CD4-positive, alpha-beta T cell (primary cell): ENCODE measurements at regions of chr15 and their contacts with region 1.

Region 1: GRCh38 chr15:90320061-90320884 is 31.8 kb upstream of the ZNF774 start:
- DNase-seq: peak; percentile 43 to 87 (median 56)
- ATAC-seq: peak; percentile 96
- H3K4me3 ChIP-seq: no peak overlapping the region
- H3K4me3 Mint-ChIP-seq: no peak overlapping the region
- H3K27ac ChIP-seq: no peak overlapping the region
- H3K27ac Mint-ChIP-seq: no peak overlapping the region
- H3K4me1 ChIP-seq: peaks cover 7% of the 10 kb centered on the region
- H3K4me1 Mint-ChIP-seq: peaks cover 9% of the 10 kb centered on the region
- H3K27me3 ChIP-seq: no peaks in the 10 kb centered on the region
- H3K27me3 Mint-ChIP-seq: no peaks in the 10 kb centered on the region
- CTCF ChIP-seq: peak; percentile 96

Region 2: DNA sequence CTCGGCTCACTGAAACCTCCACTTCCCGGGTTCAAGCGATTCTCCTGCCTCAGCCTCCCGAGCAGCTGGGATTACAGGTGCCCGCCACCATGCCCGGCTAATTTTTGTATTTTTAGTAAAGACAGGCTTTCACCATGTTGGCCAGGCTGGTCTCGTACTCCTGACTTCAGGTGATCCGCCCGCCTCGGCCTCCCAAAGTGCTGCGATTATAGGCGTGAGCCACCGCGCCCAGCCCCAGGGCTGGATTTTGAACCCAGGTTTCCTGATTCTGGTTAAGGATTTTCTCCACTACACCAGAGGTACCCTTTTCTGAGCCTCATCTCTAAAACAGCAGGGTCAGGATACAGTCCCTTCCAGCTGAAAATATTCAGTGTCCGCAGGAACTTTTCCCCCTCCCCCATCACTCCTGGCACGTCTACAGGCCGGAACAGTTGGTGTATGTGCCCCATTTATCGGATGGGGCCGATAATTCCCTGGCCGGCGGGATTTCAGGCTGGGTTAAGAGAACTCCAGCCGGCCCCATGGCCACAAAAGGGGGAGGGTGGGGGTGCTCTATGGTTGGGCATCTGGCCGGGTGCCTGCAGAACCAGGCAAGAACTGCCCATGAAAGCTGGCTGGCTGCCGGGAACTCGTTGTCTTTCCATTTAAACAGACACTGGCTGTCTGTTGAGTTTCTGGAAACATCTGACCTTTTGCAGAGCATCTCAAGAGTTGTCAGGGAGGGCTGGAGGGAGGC is 146.0 kb before region 1 on chr15:
- CTCF ChIA-PET with region 1: no interaction called
- POLR2A ChIA-PET with region 1: no interaction called
- intact Hi-C with region 1: no loop called
- DNase-seq: no peak
- ATAC-seq: no peak
- H3K4me3 ChIP-seq: no peak overlapping the region
- H3K4me3 Mint-ChIP-seq: no peak overlapping the region
- H3K27ac ChIP-seq: no peak overlapping the region
- H3K27ac Mint-ChIP-seq: no peak overlapping the region
- H3K4me1 ChIP-seq: peaks cover 12% of the 10 kb centered on the region
- H3K4me1 Mint-ChIP-seq: no peaks in the 10 kb centered on the region
- H3K27me3 ChIP-seq: no peaks in the 10 kb centered on the region
- H3K27me3 Mint-ChIP-seq: no peaks in the 10 kb centered on the region
- CTCF ChIP-seq: no peak

Region 3: GRCh38 chr15:90271459-90272166 is 48.7 kb before region 1 on chr15:
- CTCF ChIA-PET with region 1: no interaction called
- POLR2A ChIA-PET with region 1: no interaction called
- intact Hi-C with region 1: no loop called
- DNase-seq: no peak
- ATAC-seq: no peak
- H3K4me3 ChIP-seq: no peak overlapping the region
- H3K4me3 Mint-ChIP-seq: no peak overlapping the region
- H3K27ac ChIP-seq: no peak overlapping the region
- H3K27ac Mint-ChIP-seq: peak overlapping the region; percentile 85
- H3K4me1 ChIP-seq: peaks cover 51% of the 10 kb centered on the region
- H3K4me1 Mint-ChIP-seq: peaks cover 59% of the 10 kb centered on the region
- H3K27me3 ChIP-seq: no peaks in the 10 kb centered on the region
- H3K27me3 Mint-ChIP-seq: no peaks in the 10 kb centered on the region
- CTCF ChIP-seq: no peak

Region 4: GRCh38 chr15:90362936-90363212 is 42.6 kb after region 1 on chr15:
- CTCF ChIA-PET with region 1: interaction called, 4 read pairs
- POLR2A ChIA-PET with region 1: no interaction called
- intact Hi-C with region 1: loop called (anchors 2 to 5 kb)
- DNase-seq: no peak
- ATAC-seq: no peak
- H3K4me3 ChIP-seq: no peak overlapping the region
- H3K4me3 Mint-ChIP-seq: no peak overlapping the region
- H3K27ac ChIP-seq: no peak overlapping the region
- H3K27ac Mint-ChIP-seq: no peak overlapping the region
- H3K4me1 ChIP-seq: peaks cover 13% of the 10 kb centered on the region
- H3K4me1 Mint-ChIP-seq: peaks cover 28% of the 10 kb centered on the region
- H3K27me3 ChIP-seq: no peaks in the 10 kb centered on the region
- H3K27me3 Mint-ChIP-seq: no peaks in the 10 kb centered on the region
- CTCF ChIP-seq: no peak

Region 5: DNA sequence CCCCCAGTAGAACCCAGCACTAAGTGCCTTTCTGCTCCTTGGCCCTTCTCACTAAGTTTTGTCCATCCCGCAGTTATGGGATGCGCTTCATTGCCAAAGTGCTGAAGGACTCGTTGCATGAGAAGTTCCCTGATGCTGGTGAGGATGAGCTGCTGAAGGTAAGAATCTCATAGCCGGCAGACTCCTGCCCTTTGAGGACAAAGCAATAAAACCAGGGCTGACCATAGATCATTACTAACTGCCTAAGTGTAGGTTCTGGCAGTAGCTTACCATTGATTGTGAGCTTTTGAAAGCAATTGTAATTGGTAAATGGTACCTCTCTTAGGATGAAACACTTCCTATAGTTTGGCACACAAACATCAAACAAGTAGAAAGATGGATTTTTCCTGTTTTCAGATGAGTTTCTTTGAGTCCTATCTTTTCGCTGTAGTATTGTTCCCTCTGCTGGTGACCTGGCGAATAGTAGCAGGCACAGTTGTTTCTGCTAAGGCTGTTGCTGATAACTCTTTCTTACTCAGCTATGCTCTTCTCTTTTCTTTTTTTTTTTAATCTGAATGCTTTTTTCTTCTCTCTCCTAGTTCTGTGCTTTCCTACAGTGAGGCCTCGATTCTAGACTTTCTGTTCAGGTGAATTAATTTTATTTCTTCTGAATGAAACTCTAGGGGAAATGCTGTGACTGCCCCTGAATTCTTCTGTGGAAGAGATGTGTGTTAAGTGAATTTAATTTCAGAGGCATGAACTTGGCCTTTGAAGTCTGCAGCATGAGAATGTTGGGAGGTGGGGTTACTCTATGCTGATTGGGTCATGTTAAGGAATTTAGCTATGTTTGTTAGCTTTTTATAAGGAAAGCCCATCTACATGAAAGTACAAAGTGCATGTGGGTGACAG is 162.1 kb after region 1 on chr15:
- CTCF ChIA-PET with region 1: interaction called, 37 read pairs
- POLR2A ChIA-PET with region 1: interaction called, 5 read pairs
- intact Hi-C with region 1: loop called (anchors 1 kb)
- DNase-seq: peak; percentile 17 to 71 (median 38)
- ATAC-seq: peak; percentile 63
- H3K4me3 ChIP-seq: no peak overlapping the region
- H3K4me3 Mint-ChIP-seq: no peak overlapping the region
- H3K27ac ChIP-seq: no peak overlapping the region
- H3K27ac Mint-ChIP-seq: no peak overlapping the region
- H3K4me1 ChIP-seq: peaks cover 20% of the 10 kb centered on the region
- H3K4me1 Mint-ChIP-seq: peaks cover 36% of the 10 kb centered on the region
- H3K27me3 ChIP-seq: no peaks in the 10 kb centered on the region
- H3K27me3 Mint-ChIP-seq: no peaks in the 10 kb centered on the region
- CTCF ChIP-seq: peak; percentile 80

Region 6: DNA sequence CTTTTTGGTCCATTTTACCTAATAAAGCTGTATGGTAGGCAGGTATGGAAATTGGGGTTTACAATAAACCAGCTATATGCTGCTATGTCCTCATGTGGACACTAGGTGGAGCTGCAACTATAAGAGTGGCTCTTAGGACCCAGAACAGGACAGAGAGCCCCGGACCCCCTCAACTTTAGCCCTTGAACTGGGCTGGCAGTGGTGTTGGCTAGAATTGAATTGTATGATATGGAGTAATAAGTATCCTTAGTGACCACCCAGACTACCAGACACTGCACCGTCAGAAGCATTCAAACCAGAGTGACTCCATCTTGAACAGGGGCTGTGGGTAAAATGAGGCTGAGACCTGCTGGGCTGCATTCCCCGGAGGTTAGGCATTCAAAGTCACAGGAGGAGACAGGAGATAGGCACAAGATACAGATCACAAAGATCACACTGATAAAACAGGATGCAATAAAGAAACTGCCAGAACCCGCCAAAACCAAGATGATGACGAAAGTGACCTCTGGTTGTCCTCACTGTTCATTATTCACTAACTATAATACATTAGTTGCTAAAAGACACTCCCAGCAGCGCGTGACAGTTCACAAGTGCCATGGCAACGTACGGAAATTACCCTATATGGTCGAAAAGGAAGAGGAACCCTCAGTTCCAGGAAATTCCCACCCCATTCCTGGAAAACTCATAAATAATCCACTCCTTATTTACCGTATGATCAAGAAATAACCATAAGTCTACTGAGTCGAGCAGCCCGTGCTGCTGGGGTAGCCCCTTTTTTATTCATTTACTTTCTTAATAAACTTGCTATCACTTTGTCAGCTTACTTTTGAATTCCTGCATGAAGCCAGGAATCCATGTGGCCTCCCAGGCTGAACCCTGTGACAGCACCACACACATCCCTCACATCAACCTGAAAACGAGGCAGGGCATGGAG is 328.1 kb after region 1 on chr15:
- CTCF ChIA-PET with region 1: no interaction called
- POLR2A ChIA-PET with region 1: no interaction called
- intact Hi-C with region 1: loop called in 1 of 2 experiments (anchors 10 kb)
- DNase-seq: peak; percentile 17 to 83 (median 44)
- ATAC-seq: peak; percentile 83
- H3K4me3 ChIP-seq: no peak overlapping the region
- H3K4me3 Mint-ChIP-seq: peak overlapping the region; percentile 30
- H3K27ac ChIP-seq: no peak overlapping the region
- H3K27ac Mint-ChIP-seq: peak overlapping the region; percentile 16
- H3K4me1 ChIP-seq: peaks cover 27% of the 10 kb centered on the region
- H3K4me1 Mint-ChIP-seq: peaks cover 34% of the 10 kb centered on the region
- H3K27me3 ChIP-seq: peaks cover 0 to 2% of the 10 kb centered on the region in 2 experiments
- H3K27me3 Mint-ChIP-seq: no peaks in the 10 kb centered on the region
- CTCF ChIP-seq: peak; percentile 93

Region 7: GRCh38 chr15:90691982-90692773 is 371.9 kb after region 1 on chr15:
- CTCF ChIA-PET with region 1: no interaction called
- POLR2A ChIA-PET with region 1: no interaction called
- intact Hi-C with region 1: loop called (anchors 1 to 5 kb)
- DNase-seq: no peak
- ATAC-seq: no peak
- H3K4me3 ChIP-seq: no peak overlapping the region
- H3K4me3 Mint-ChIP-seq: no peak overlapping the region
- H3K27ac ChIP-seq: no peak overlapping the region
- H3K27ac Mint-ChIP-seq: no peak overlapping the region
- H3K4me1 ChIP-seq: peaks cover 2% of the 10 kb centered on the region
- H3K4me1 Mint-ChIP-seq: peaks cover 18% of the 10 kb centered on the region
- H3K27me3 ChIP-seq: no peaks in the 10 kb centered on the region
- H3K27me3 Mint-ChIP-seq: no peaks in the 10 kb centered on the region
- CTCF ChIP-seq: no peak

Region 8: GRCh38 chr15:90886041-90886614 is 565.9 kb after region 1 on chr15:
- CTCF ChIA-PET with region 1: interaction called, 6 read pairs
- POLR2A ChIA-PET with region 1: no interaction called
- intact Hi-C with region 1: loop called (anchors 1 to 5 kb)
- DNase-seq: peak; percentile 62 to 87 (median 74)
- ATAC-seq: peak; percentile 70
- H3K4me3 ChIP-seq: peak overlapping the region; percentile 42
- H3K4me3 Mint-ChIP-seq: no peak overlapping the region
- H3K27ac ChIP-seq: no peak overlapping the region
- H3K27ac Mint-ChIP-seq: no peak overlapping the region
- H3K4me1 ChIP-seq: peaks cover 26% of the 10 kb centered on the region
- H3K4me1 Mint-ChIP-seq: peaks cover 13% of the 10 kb centered on the region
- H3K27me3 ChIP-seq: peaks cover 3 to 5% of the 10 kb centered on the region in 2 experiments
- H3K27me3 Mint-ChIP-seq: peaks cover 15% of the 10 kb centered on the region
- CTCF ChIP-seq: peak; percentile 98

Region 9: DNA sequence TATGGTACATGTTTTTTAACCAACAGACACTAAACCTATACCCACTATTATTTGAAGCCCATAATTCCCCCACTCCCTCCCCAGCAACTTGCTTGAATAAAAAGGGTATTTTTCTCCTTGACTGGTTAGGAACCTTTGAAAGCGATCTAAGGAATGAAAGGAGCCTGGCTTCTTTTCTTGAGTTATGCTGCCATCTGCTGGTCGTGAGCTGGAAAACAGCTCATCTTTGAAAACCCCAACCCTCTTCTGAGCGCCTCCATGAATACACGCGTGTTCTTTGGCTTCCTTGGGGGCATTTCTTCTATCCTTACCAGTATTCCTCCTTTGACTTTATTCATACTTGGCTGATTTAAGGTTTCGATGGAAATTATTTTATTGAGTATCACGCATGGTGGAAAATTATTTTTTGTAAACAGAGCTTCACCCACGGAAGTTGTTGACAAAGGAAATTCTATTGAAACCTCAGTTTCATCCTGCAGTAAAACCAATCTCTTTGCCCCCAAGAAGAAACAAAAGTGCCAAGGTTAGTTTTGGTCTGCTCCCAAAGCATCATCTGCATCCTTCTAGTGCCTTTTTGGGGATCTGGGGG is 951.4 kb after region 1 on chr15:
- CTCF ChIA-PET with region 1: no interaction called
- POLR2A ChIA-PET with region 1: no interaction called
- intact Hi-C with region 1: loop called in 1 of 2 experiments (anchors 10 kb)
- DNase-seq: peak; percentile 23 to 84 (median 44)
- ATAC-seq: peak; percentile 71
- H3K4me3 ChIP-seq: no peak overlapping the region
- H3K4me3 Mint-ChIP-seq: no peak overlapping the region
- H3K27ac ChIP-seq: no peak overlapping the region
- H3K27ac Mint-ChIP-seq: no peak overlapping the region
- H3K4me1 ChIP-seq: peaks cover 5% of the 10 kb centered on the region
- H3K4me1 Mint-ChIP-seq: peaks cover 6% of the 10 kb centered on the region
- H3K27me3 ChIP-seq: no peaks in the 10 kb centered on the region
- H3K27me3 Mint-ChIP-seq: peaks cover 28% of the 10 kb centered on the region
- CTCF ChIP-seq: peak; percentile 82